CD8-positive, alpha-beta T cell (primary cell): ENCODE measurements at regions of chr22 and their contacts with region 1.

Region 1: DNA sequence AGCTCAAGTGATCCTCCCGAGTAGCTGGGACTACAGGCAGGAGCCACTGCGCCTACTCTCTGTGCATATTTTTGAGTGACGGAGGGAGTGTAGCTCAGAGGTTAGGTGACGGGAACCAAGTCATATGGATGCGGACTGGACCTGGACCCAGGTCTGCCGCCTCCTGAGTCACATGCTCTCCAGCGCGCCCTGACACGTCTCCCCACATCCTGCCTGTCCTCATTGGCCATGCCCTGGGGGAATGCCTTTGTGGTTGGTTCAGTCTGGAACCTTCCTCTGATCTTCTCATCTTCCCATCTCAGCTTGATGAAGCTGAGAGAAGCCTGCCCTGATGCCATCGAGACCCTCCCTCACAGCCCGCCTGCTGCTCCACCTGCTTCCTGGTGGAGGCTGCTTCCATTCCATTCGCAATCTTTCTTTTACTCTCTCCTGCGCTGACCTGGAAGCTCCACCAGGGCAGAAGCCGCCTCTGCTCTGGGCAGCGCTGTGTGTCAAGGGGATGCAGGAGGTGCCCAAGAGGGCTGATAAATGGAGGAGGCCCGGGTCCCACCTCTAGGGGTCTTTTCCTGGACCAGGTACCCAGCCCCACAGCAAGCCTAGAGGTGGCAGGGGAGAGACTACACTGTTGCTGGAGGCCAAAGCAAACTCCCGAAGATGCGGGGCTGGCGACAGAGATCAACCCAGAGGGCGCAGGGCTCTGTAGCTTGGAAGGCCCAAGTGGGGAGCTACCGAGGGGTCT is 13.9 kb upstream of the BAIAP2L2 start:
- DNase-seq: no peak
- ATAC-seq: no peak
- H3K4me3 ChIP-seq: no peak overlapping the region
- H3K4me3 Mint-ChIP-seq: no peak overlapping the region
- H3K27ac ChIP-seq: no peak overlapping the region
- H3K27ac Mint-ChIP-seq: no peak overlapping the region
- H3K4me1 ChIP-seq: no peaks in the 10 kb centered on the region
- H3K4me1 Mint-ChIP-seq: no peaks in the 10 kb centered on the region
- H3K27me3 ChIP-seq: no peaks in the 10 kb centered on the region
- H3K27me3 Mint-ChIP-seq: no peaks in the 10 kb centered on the region
- CTCF ChIP-seq: no peak

Region 2: DNA sequence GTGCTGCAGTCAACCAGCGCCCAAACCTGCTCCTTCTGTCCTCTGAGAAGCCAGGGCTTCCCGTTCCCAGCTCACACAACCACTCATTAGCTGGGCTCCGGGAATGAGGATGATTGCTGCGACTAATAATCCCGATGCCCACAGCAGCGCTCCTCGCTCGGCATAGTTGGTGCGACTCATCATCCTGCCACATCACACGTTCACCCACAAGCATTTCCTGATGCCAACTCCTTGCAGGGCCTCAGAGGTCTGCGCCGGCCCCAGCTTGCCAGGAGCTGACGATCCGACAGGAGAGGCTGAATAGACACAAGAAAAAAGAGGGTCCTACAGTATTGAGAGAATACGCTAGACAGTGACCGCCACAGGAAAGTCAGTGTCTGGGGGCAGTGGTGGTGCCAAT is 203.4 kb after region 1 on chr22:
- CTCF ChIA-PET with region 1: no interaction called
- POLR2A ChIA-PET with region 1: no interaction called
- intact Hi-C with region 1: no loop called
- DNase-seq: peak in 3 of 9 experiments; percentile 38 to 54 (median 50)
- ATAC-seq: no peak
- H3K4me3 ChIP-seq: peak overlapping the region in 1 of 2 experiments; percentile 11
- H3K4me3 Mint-ChIP-seq: peak overlapping the region; percentile 55
- H3K27ac ChIP-seq: no peak overlapping the region
- H3K27ac Mint-ChIP-seq: peak overlapping the region; percentile 72
- H3K4me1 ChIP-seq: no peaks in the 10 kb centered on the region
- H3K4me1 Mint-ChIP-seq: peaks cover 4% of the 10 kb centered on the region
- H3K27me3 ChIP-seq: no peaks in the 10 kb centered on the region
- H3K27me3 Mint-ChIP-seq: no peaks in the 10 kb centered on the region
- CTCF ChIP-seq: no peak

Region 3: GRCh38 chr22:38347897-38348750 is 223.7 kb after region 1 on chr22:
- CTCF ChIA-PET with region 1: no interaction called
- POLR2A ChIA-PET with region 1: no interaction called
- intact Hi-C with region 1: loop called in 1 of 2 experiments (anchors 10 kb)
- DNase-seq: peak in 1 of 9 experiments; percentile 25
- ATAC-seq: no peak
- H3K4me3 ChIP-seq: no peak overlapping the region
- H3K4me3 Mint-ChIP-seq: no peak overlapping the region
- H3K27ac ChIP-seq: no peak overlapping the region
- H3K27ac Mint-ChIP-seq: no peak overlapping the region
- H3K4me1 ChIP-seq: peaks cover 2% of the 10 kb centered on the region
- H3K4me1 Mint-ChIP-seq: no peaks in the 10 kb centered on the region
- H3K27me3 ChIP-seq: no peaks in the 10 kb centered on the region
- H3K27me3 Mint-ChIP-seq: peaks cover 5% of the 10 kb centered on the region
- CTCF ChIP-seq: no peak